Mammary epithelial cell (primary cell): ENCODE measurements at regions of chr6 and their contacts with region 1.

Region 1: DNA sequence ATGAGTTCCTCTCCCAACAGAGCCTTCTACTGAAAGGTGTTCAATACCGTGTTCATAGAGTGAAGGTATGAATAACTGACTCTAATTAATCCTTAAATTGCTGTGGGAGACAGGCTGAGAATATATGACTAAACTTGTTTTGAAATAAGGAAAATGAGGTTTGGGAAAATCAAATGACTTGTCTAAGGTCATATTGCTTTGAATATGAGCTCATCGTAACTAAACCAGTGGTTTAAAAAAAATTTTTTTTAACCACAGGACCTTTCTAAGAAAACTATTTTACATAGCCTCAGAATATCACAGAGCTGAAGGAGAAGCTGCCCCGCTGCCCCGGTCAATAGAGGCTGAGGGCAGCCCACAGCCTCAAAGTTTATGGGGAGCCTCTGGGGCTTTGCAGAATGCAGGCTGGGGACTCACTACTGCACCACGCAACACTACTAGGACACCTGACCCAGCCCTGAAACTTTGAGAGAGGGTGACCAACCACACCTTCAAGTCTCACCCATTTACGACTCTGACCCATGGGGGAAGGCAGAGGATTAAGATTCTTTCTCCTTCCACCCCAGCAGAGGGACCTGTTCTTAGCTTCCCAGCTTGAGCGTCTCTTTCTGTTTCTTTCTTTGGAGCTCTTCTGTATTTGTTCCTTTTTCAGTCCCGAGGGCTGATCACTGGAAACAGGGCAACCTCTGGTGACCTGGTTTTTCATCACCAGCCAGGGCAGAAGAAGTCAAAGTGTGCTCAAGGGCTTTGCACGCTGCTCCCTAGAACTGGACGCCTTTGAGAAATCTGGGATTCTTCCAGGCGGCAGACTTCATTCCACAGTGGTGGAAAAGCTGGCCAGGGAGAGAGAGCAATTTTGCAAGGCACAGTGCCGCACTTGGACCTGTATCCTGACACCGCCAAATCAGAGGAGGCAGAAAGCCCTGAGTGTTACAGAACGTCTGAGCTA is 220.2 kb downstream of the ATXN1 start:
- DNase-seq: no peak
- H3K4me3 ChIP-seq: no peak overlapping the region
- H3K27ac ChIP-seq: no peak overlapping the region
- H3K4me1 ChIP-seq: no peaks in the 10 kb centered on the region
- H3K27me3 ChIP-seq: no peaks in the 10 kb centered on the region
- CTCF ChIP-seq: no peak

Region 2: GRCh38 chr6:16562498-16562897 is 21.4 kb after region 1 on chr6:
- CTCF ChIA-PET with region 1: no interaction called
- dilution Hi-C with region 1: no loop called
- in situ Hi-C with region 1: no loop called
- intact Hi-C with region 1: no loop called
- DNase-seq: peak; percentile 26
- H3K4me3 ChIP-seq: no peak overlapping the region
- H3K27ac ChIP-seq: no peak overlapping the region
- H3K4me1 ChIP-seq: no peaks in the 10 kb centered on the region
- H3K27me3 ChIP-seq: no peaks in the 10 kb centered on the region
- CTCF ChIP-seq: no peak

Region 3: DNA sequence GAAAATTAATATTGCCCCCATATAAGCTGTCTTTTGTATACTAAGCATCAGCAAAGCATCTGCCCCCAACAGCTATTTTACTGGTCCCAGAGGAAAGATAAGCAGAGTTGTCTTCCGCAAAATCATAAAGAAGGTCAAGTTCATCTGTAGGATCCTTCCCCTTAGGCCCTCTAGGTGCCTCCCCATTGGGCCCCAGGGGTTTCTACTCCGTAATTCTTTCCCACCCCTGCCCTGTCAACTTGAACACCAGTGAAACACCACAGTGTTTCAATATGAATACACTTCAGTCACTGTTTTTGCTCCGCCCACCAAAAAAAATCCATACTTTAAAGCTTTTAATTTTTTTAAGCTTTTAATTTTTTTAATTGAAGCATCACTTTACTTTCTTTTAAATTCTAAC is 61.0 kb after region 1 on chr6:
- CTCF ChIA-PET with region 1: no interaction called
- dilution Hi-C with region 1: loop called (anchors 10 kb)
- in situ Hi-C with region 1: no loop called
- intact Hi-C with region 1: no loop called
- DNase-seq: no peak
- H3K4me3 ChIP-seq: no peak overlapping the region
- H3K27ac ChIP-seq: no peak overlapping the region
- H3K4me1 ChIP-seq: peaks cover 17% of the 10 kb centered on the region
- H3K27me3 ChIP-seq: no peaks in the 10 kb centered on the region
- CTCF ChIP-seq: no peak

Region 4: GRCh38 chr6:16683524-16684194 is 142.6 kb after region 1 on chr6:
- CTCF ChIA-PET with region 1: no interaction called
- dilution Hi-C with region 1: no loop called
- in situ Hi-C with region 1: no loop called
- intact Hi-C with region 1: no loop called
- DNase-seq: peak; percentile 95
- H3K4me3 ChIP-seq: peak overlapping the region in 1 of 3 experiments; percentile 24
- H3K27ac ChIP-seq: peak overlapping the region; percentile 91
- H3K4me1 ChIP-seq: peaks cover 50% of the 10 kb centered on the region
- H3K27me3 ChIP-seq: no peaks in the 10 kb centered on the region
- CTCF ChIP-seq: no peak